ENCODE measurements at regions of chr1 and their contacts with region 1.

Region 1: GRCh38 chr1:91165033-91165654 is 143.3 kb upstream of the ZNF644 start:
- DNase-seq: peak; percentile 70 to 77
- ATAC-seq: peak; percentile 79 to 95 (median 93)
- H3K4me3 ChIP-seq: no peak overlapping the region
- H3K4me3 Mint-ChIP-seq: no peak overlapping the region
- H3K27ac ChIP-seq: no peak overlapping the region
- H3K27ac Mint-ChIP-seq: no peak overlapping the region
- H3K4me1 ChIP-seq: no peaks in the 10 kb centered on the region
- H3K4me1 Mint-ChIP-seq: peaks cover 0 to 16% of the 10 kb centered on the region in 2 donors
- H3K27me3 ChIP-seq: no peaks in the 10 kb centered on the region
- H3K27me3 Mint-ChIP-seq: peaks cover 5 to 15% of the 10 kb centered on the region in 2 donors
- CTCF ChIP-seq: peak; percentile 93

Region 2: DNA sequence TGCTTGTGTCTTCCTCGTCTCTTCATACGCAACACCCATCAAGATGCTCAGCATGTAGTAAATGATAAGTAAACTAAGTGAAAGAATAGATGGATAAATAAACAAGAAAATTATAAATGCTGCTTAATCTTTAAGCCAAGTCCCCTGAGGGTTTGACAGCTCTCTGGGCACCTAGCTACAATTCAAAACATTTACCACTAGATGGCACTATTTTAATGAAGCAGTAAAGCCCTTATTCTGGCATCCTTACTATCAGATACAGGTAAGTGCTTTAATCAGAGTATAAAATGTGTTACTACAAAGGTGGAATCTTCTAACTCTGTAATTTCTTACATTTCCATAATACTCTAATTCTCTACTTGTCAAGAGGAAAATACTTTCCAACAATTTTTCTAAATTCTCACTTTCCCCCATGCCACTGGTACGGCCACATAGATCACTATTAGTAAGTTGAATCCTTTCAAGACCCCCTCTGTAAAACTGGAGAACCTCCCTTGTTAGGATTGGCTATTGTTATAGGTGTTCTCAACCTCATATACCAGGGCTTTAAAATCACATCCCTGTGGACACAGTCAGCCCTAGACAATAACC is 585.8 kb before region 1 on chr1:
- intact Hi-C with region 1: loop called (anchors 2 kb)
- DNase-seq: peak in 1 of 2 donors; percentile 54
- ATAC-seq: peak in 1 of 3 donors; percentile 68
- H3K4me3 ChIP-seq: no peak overlapping the region
- H3K4me3 Mint-ChIP-seq: no peak overlapping the region
- H3K27ac ChIP-seq: no peak overlapping the region
- H3K27ac Mint-ChIP-seq: no peak overlapping the region
- H3K4me1 ChIP-seq: no peaks in the 10 kb centered on the region
- H3K4me1 Mint-ChIP-seq: no peaks in the 10 kb centered on the region
- H3K27me3 ChIP-seq: no peaks in the 10 kb centered on the region
- H3K27me3 Mint-ChIP-seq: peaks cover 4 to 7% of the 10 kb centered on the region in 2 donors
- CTCF ChIP-seq: peak; percentile 69

Region 3: GRCh38 chr1:90721210-90722194 is 443.6 kb before region 1 on chr1:
- intact Hi-C with region 1: loop called (anchors 1 kb)
- DNase-seq: peak in 1 of 2 donors; percentile 71
- ATAC-seq: peak in 2 of 3 donors; percentile 49 to 61
- H3K4me3 ChIP-seq: no peak overlapping the region
- H3K4me3 Mint-ChIP-seq: peak overlapping the region; percentile 49
- H3K27ac ChIP-seq: no peak overlapping the region
- H3K27ac Mint-ChIP-seq: no peak overlapping the region
- H3K4me1 ChIP-seq: peaks cover 49% of the 10 kb centered on the region
- H3K4me1 Mint-ChIP-seq: peaks cover 39 to 46% of the 10 kb centered on the region in 2 donors
- H3K27me3 ChIP-seq: peaks cover 88% of the 10 kb centered on the region
- H3K27me3 Mint-ChIP-seq: peaks cover 83 to 92% of the 10 kb centered on the region in 2 donors
- CTCF ChIP-seq: peak; percentile 74

Region 4: GRCh38 chr1:91021686-91022517 is 143.2 kb before region 1 on chr1 and contains the start of gene ZNF644:
- intact Hi-C with region 1: loop called (anchors 2 kb)
- DNase-seq: peak; percentile 84 to 96
- ATAC-seq: peak; percentile 79 to 91 (median 79)
- H3K4me3 ChIP-seq: peak within 1 kb of the TSS; percentile 99
- H3K4me3 Mint-ChIP-seq: peak within 1 kb of the TSS; percentile 92
- H3K27ac ChIP-seq: peak within 1 kb of the TSS; percentile 100
- H3K27ac Mint-ChIP-seq: peak within 1 kb of the TSS; percentile 94 to 97
- H3K4me1 ChIP-seq: peaks cover 20% of the 10 kb centered on the region
- H3K4me1 Mint-ChIP-seq: peaks cover 39 to 48% of the 10 kb centered on the region in 2 donors
- H3K27me3 ChIP-seq: no peaks in the 10 kb centered on the region
- H3K27me3 Mint-ChIP-seq: no peaks in the 10 kb centered on the region
- CTCF ChIP-seq: no peak
- total RNA-seq, gene ZNF644: 135 to 157 (median 142) TPM

Region 5: DNA sequence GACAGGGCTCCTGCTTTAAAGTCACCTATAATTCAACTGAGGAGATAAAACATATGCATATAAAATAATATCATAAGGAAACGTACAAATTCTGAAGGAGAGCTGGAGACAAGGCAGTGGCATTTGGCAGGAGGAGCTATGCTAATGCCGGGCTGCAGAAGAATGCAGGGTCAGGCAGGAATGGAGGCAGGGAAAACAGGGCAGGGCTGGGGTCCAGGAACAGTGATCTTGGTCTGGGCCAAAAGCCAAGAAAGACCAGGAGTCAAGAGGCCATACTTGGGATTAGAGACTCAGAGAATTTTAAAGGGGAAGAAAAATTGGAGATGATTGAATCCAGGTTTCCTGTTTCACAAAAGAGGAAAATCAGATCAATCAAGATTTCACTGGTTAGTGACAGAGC is 764.1 kb after region 1 on chr1:
- intact Hi-C with region 1: loop called (anchors 5 kb)
- DNase-seq: no peak
- ATAC-seq: no peak
- H3K4me3 ChIP-seq: no peak overlapping the region
- H3K4me3 Mint-ChIP-seq: no peak overlapping the region
- H3K27ac ChIP-seq: no peak overlapping the region
- H3K27ac Mint-ChIP-seq: no peak overlapping the region
- H3K4me1 ChIP-seq: peaks cover 2% of the 10 kb centered on the region
- H3K4me1 Mint-ChIP-seq: peaks cover 2% of the 10 kb centered on the region in 2 donors
- H3K27me3 ChIP-seq: no peaks in the 10 kb centered on the region
- H3K27me3 Mint-ChIP-seq: no peaks in the 10 kb centered on the region
- CTCF ChIP-seq: no peak